ENCODE measurements at regions of chr17 and their contacts with region 1.

Region 1: GRCh38 chr17:4966844-4967538 is 626 bp downstream of the SPAG7 start:
- DNase-seq: peak; percentile 95

Region 2: DNA sequence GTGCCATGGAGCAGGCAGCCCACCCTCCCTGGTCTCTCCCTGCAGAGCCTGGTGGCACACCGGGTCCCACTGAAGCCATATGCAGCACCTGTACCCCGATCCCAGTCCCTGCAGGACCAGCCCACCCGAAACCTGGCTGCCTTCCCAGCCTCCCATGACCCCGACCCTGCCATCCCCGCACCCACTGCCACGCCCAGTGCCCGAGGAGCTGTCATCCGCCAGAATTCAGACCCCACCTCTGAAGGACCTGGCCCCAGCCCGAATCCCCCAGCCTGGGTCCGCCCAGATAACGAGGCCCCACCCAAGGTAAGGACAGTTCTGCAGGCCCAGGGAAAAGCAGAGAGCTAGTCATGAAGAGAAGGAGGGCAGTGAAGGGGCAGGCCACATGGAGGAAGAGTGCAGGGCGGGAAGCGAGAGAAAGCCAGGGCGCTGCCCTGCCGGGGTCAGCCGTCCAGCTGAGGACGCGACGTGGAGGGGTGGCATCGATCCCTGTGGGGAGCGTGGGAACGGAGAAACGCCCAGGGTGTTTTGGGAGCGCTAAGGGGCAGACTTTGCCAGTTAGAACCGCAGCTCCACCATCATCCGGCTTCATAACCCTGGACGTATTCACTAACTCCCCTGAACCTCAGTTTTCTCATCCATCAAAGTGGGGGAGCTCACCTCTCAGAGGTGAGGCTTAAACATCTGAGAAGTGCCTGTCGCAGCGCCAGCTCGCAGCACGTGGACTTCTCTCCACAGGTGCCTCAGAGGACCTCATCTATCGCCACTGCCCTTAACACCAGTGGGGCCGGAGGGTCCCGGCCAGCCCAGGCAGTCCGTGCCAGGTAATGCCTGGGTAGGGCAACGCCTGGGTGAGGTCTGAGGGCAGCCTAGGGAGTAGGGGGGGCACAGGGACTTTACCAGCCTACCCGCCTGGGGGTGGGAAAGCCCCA is 75.3 kb before region 1 on chr17:
- CTCF ChIA-PET with region 1: no interaction called
- POLR2A ChIA-PET with region 1: no interaction called
- DNase-seq: no peak

Region 3: GRCh38 chr17:4908301-4908700 is 58.7 kb before region 1 on chr17:
- CTCF ChIA-PET with region 1: interaction called, 8 read pairs
- POLR2A ChIA-PET with region 1: interaction called, 27 read pairs
- DNase-seq: no peak

Region 4: DNA sequence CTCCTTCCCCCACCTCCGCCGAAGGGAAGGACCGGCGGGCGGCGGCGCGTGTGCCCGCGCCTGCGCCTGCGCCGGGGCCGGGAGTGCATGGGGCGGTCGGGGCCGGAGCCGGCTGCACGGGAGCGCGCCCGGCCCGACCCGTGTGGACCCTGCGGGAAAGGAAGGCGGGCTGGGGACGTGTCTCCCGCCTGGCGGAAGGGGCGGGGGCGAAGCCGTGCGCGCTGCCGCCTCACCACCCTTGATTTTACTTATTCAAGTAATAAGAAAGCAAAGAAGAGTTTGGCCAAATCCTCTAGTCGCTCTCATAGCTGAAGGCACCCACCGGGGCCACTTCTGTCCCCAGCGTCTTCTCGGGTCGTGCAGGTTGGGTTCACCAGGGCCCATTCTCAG is 18.1 kb before region 1 on chr17:
- CTCF ChIA-PET with region 1: no interaction called
- POLR2A ChIA-PET with region 1: interaction called, 110 read pairs
- DNase-seq: peak; percentile 83

Region 5: GRCh38 chr17:4986951-4987766 is 20.2 kb after region 1 on chr17 and contains the start of gene CAMTA2:
- CTCF ChIA-PET with region 1: interaction called, 8 read pairs
- POLR2A ChIA-PET with region 1: interaction called, 39 read pairs
- DNase-seq: peak; percentile 79